Activated CD8-positive, alpha-beta T cell treated with anti-CD3 and anti-CD28 coated beads for 36 hours (primary cell): ENCODE measurements at regions of chr1 and their contacts with region 1.

Region 1: DNA sequence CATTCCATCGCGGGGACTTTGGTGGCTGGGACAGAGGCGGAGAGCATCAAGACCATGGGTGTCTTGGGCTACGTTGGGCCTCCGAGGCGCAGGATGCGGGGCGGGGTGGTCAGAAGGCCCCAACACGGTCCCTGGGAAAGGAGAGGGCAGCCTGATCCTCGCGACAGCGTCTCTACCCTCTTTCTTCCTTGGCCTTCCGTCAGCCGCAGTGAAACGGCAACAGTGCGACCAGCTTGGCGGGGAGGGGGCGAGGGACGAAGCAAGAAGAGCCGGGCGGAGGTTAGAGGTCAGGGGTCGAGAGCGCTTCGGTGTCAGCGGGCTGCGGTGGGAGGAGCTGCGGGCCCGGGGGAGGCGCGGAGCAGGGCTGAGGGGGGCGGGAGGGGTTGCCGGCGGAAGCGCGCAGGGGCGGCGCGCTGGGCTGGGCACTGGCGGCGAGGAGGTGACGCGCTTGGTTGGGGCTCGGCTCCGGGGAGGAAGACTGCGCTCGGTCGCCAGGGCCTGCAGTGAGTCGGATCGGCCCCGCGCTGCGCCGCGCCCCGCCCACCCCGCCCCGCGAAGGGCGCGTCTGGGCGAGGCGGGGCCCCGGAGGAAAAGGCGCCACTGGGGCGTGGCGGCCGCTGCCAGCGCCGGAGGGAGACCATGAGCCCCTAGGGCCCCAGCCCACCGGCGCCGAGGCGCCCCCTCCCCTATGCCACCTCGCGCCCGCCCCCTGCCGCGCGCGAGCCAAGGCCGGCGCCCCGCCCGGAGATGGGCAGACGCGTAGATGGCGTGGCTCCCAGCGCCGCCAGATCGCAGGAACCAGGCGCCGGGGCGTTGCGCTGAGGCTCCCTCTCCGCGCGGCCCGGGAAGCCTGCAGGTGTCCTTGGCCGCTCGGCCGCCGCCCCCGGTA is at the start of gene KCNC4:
- DNase-seq: peak; percentile 93
- ATAC-seq: peak; percentile 90
- H3K4me3 Mint-ChIP-seq: peak within 1 kb of the TSS; percentile 87
- H3K27ac Mint-ChIP-seq: peak within 1 kb of the TSS; percentile 85
- H3K4me1 Mint-ChIP-seq: peaks cover 44% of the 10 kb centered on the region
- H3K27me3 Mint-ChIP-seq: no peaks in the 10 kb centered on the region
- CTCF ChIP-seq: no peak
- total RNA-seq, gene KCNC4: 10.7 to 12.2 TPM

Region 2: GRCh38 chr1:109984456-109985275 is 225.3 kb before region 1 on chr1 and contains the start of gene AHCYL1:
- CTCF ChIA-PET with region 1: no interaction called
- POLR2A ChIA-PET with region 1: no interaction called
- intact Hi-C with region 1: no loop called
- DNase-seq: peak; percentile 100
- ATAC-seq: peak; percentile 99
- H3K4me3 Mint-ChIP-seq: peak within 1 kb of the TSS; percentile 98
- H3K27ac Mint-ChIP-seq: peak within 1 kb of the TSS; percentile 98
- H3K4me1 Mint-ChIP-seq: peaks cover 33% of the 10 kb centered on the region
- H3K27me3 Mint-ChIP-seq: no peaks in the 10 kb centered on the region
- CTCF ChIP-seq: peak; percentile 84
- total RNA-seq, gene AHCYL1: 77.8 to 79.1 TPM

Region 3: DNA sequence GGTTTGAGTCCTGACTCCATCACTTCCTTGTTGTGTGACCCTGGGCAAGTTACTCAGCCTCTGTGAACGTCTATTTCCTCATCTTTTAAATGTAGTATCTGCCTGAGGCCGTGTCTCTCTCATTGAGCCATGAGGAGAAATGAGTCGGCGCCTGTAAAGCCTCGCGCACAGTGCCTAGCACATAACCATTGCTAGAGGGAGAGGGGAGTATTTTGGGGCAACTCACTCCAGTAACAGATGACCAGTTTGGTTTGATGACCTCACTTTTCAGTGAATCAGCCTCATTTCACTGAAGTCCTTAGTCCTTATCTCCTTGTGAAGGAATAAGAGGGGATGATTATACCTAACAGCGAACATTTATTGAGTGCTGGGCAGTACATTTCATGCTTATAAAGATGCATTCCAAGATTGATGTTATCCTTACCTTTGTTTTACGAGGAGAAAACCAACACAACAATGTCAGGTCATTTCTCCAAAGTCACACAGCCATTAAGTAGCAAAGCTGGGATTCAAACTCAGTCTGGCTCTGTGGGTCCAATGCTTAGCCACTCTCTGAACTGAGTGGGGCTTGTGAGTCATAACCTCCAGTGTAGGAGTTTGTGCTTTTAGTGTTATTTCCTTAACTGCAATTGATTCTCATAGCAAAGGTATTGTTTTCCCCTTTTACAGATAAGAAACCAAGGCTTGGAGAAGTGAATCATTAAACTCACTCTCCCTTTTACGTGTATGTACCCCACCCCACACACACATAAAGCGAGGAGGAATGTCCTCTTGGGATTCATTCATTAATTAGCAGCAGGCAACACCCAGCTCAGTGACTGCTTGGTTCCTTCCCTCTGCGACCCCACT is 26.1 kb after region 1 on chr1:
- CTCF ChIA-PET with region 1: interaction called, 31 read pairs
- POLR2A ChIA-PET with region 1: interaction called, 4 read pairs
- intact Hi-C with region 1: loop called (anchors 2 kb)
- DNase-seq: peak; percentile 76
- ATAC-seq: peak; percentile 87
- H3K4me3 Mint-ChIP-seq: no peak overlapping the region
- H3K27ac Mint-ChIP-seq: peak overlapping the region; percentile 92
- H3K4me1 Mint-ChIP-seq: peaks cover 54% of the 10 kb centered on the region
- H3K27me3 Mint-ChIP-seq: no peaks in the 10 kb centered on the region
- CTCF ChIP-seq: no peak

Region 4: DNA sequence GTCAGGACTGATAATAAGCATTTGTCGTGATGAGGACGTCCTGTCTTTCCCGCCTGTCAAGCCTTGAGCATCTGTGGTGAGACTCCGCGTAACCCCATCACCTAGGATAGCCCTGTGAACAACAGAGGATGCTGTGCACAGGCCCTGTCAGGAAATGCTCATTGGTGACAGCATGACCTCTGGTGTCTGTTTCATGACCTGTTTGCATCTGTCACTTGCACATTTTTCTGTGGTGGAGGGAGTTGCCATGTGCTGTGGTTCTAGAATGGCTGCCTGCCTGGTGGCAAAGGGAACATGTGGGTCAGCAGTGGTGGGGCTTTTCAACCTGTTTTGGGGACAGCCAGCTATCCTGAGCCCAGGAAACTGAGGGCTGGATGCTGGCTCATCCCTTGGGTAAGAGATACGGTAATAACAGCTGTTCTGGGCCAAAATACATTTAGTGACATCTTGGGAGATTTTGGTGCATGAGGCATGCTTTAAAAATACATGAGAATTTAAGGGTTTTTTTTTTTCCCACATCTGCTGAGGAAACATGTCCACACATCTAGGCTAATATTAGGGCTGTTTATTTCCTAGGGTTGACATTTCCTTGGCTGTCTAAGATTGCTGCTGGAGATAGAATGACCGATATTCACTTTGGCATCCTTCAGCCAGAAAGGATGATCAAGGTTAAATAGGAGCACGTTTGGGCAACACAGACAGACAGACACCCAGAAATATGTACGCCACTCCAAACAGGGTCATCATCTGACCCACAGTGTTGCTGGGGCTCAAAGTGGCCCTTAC is 53.1 kb after region 1 on chr1:
- CTCF ChIA-PET with region 1: interaction called, 35 read pairs
- POLR2A ChIA-PET with region 1: no interaction called
- intact Hi-C with region 1: no loop called
- DNase-seq: peak; percentile 43
- ATAC-seq: peak; percentile 83
- H3K4me3 Mint-ChIP-seq: no peak overlapping the region
- H3K27ac Mint-ChIP-seq: no peak overlapping the region
- H3K4me1 Mint-ChIP-seq: no peaks in the 10 kb centered on the region
- H3K27me3 Mint-ChIP-seq: no peaks in the 10 kb centered on the region
- CTCF ChIP-seq: no peak

Region 5: GRCh38 chr1:110298991-110299390 is 89.0 kb after region 1 on chr1:
- CTCF ChIA-PET with region 1: interaction called, 761 read pairs
- POLR2A ChIA-PET with region 1: no interaction called
- intact Hi-C with region 1: no loop called
- DNase-seq: no peak
- ATAC-seq: no peak
- H3K4me3 Mint-ChIP-seq: no peak overlapping the region
- H3K27ac Mint-ChIP-seq: no peak overlapping the region
- H3K4me1 Mint-ChIP-seq: no peaks in the 10 kb centered on the region
- H3K27me3 Mint-ChIP-seq: no peaks in the 10 kb centered on the region
- CTCF ChIP-seq: no peak

Region 6: DNA sequence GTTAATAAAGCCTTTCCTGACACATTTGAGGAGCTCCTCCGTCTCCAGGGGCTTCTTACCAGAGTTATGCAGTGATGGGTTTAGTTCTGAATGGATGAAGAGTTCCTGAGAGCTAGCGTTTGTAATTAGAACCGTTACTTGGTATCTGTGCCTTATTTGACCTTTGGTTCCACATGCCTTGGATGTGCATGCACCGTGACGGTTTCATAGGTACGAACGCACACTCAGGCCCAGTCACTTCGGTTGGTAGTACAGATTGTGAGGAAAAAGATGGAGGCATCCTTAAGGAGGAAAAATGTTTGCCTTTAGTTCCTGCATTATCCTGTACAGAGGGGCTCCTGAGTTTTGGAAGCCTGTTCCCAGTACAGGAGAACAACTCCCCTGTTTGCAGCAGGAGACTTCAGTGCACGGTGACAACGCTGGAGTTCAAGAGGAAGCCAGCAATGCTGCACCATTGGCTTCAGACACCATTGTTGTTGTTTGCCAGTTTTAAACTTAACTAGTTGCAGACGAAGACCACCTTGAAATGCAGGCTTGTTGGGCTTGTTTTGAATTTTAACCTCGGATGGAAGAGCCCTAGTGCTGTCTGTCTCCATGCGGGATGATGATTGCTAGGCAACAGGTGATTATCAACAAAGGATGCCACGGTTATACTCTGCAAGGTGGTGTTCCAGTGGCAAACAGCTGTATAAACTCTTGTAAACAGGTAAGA is 137.4 kb after region 1 on chr1:
- CTCF ChIA-PET with region 1: interaction called, 153 read pairs
- POLR2A ChIA-PET with region 1: no interaction called
- intact Hi-C with region 1: no loop called
- DNase-seq: no peak
- ATAC-seq: no peak
- H3K4me3 Mint-ChIP-seq: peak overlapping the region; percentile 18
- H3K27ac Mint-ChIP-seq: no peak overlapping the region
- H3K4me1 Mint-ChIP-seq: peaks cover 86% of the 10 kb centered on the region
- H3K27me3 Mint-ChIP-seq: no peaks in the 10 kb centered on the region
- CTCF ChIP-seq: no peak

Region 7: DNA sequence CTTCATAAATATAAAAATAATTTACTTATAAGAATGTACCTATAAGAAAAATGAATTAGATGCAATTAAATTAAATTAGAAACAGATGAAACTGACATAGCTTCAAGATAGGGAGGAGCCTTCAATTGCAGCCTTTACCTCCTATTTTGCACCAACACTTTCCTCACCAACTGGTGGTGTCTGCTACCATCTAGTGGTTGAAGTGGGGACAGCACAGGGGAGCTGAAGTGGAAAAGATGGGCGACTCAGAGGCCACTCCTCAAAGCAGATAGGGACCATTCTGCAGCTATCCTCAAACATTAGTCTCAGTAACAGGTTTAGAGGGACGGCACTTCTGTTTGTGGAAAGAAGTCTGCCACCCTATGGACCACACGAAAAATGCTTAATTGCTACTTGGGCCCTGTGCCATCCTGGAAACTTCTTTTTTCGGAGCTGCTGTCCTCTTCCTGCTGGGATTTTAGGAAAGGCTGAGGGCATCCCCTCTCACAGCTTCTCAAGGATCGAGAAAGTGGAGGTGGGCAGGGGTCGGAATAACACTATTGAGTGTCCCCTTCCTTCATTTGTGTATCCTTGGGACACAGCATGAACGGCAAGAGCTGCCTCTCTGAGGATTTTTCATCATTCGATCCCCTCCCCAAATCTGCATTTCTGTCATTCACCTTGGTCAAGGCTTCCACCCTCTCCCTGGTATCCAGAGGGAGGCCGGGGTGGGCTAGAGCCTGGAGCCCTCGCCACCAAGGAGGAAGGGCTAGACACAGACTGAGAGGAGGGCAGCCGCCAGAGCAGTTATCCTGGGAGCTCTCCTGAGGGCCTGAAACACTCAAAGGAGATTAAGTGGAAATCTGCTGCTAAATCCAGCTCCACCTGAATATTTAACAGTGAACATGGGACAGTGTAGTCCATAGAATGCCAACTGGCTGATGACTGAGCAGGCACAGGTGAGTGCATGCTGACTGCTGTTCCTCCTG is 250.6 kb after region 1 on chr1:
- CTCF ChIA-PET with region 1: interaction called, 179 read pairs
- POLR2A ChIA-PET with region 1: interaction called, 3 read pairs
- intact Hi-C with region 1: no loop called
- DNase-seq: peak; percentile 90
- ATAC-seq: peak; percentile 100
- H3K4me3 Mint-ChIP-seq: no peak overlapping the region
- H3K27ac Mint-ChIP-seq: no peak overlapping the region
- H3K4me1 Mint-ChIP-seq: no peaks in the 10 kb centered on the region
- H3K27me3 Mint-ChIP-seq: no peaks in the 10 kb centered on the region
- CTCF ChIP-seq: peak; percentile 89